ENCODE measurements at regions of chr5 and their contacts with region 1.

Region 1: GRCh38 chr5:30040488-30041118 is 1152.9 kb upstream of the CDH6 start:
- DNase-seq: peak in 4 of 10 donors; percentile 9 to 62 (median 37)
- H3K4me3 ChIP-seq: no peak overlapping the region
- H3K27ac ChIP-seq: no peak overlapping the region
- H3K27me3 ChIP-seq: no peaks in the 10 kb centered on the region
- CTCF ChIP-seq: peak; percentile 56 to 88 (median 72)

Region 2: GRCh38 chr5:31270396-31270795 is 1229.8 kb after region 1 on chr5:
- intact Hi-C with region 1: loop called in 1 of 2 experiments (anchors 5 kb)
- DNase-seq: no peak
- H3K4me3 ChIP-seq: no peak overlapping the region
- H3K27ac ChIP-seq: no peak overlapping the region
- H3K27me3 ChIP-seq: peaks cover 0 to 5% (median 0%) of the 10 kb centered on the region in 45 donors
- CTCF ChIP-seq: peak; percentile 48 to 78 (median 69)